ENCODE measurements at regions of chr2 and their contacts with region 1.

Region 1: GRCh38 chr2:168246483-168247340 is 683 bp downstream of the STK39 start:
- DNase-seq: peak; percentile 64 to 84 (median 79)
- ATAC-seq: peak; percentile 73
- H3K4me3 ChIP-seq: peak overlapping the region; percentile 74
- H3K4me3 Mint-ChIP-seq: peak overlapping the region; percentile 71 to 95 (median 93)
- H3K27ac ChIP-seq: peak overlapping the region; percentile 77
- H3K27ac Mint-ChIP-seq: peak overlapping the region; percentile 75 to 94 (median 93)
- H3K4me1 ChIP-seq: peaks cover 27 to 30% of the 10 kb centered on the region in 2 donors
- H3K4me1 Mint-ChIP-seq: peaks cover 16 to 49% (median 42%) of the 10 kb centered on the region in 7 donors
- H3K27me3 ChIP-seq: no peaks in the 10 kb centered on the region
- H3K27me3 Mint-ChIP-seq: peaks cover 0 to 11% (median 0%) of the 10 kb centered on the region in 5 donors

Region 2: GRCh38 chr2:168136392-168136977 is 110.2 kb before region 1 on chr2:
- CTCF ChIA-PET with region 1: no interaction called
- POLR2A ChIA-PET with region 1: no interaction called
- intact Hi-C with region 1: loop called (anchors 1 to 2 kb)
- DNase-seq: peak in 5 of 9 donors; percentile 14 to 36 (median 27)
- ATAC-seq: peak; percentile 67
- H3K4me3 ChIP-seq: no peak overlapping the region
- H3K4me3 Mint-ChIP-seq: no peak overlapping the region
- H3K27ac ChIP-seq: no peak overlapping the region
- H3K27ac Mint-ChIP-seq: peak overlapping the region in 2 of 9 donors; percentile 4 to 44
- H3K4me1 ChIP-seq: no peaks in the 10 kb centered on the region
- H3K4me1 Mint-ChIP-seq: peaks cover 4 to 11% (median 8%) of the 10 kb centered on the region in 7 donors
- H3K27me3 ChIP-seq: no peaks in the 10 kb centered on the region
- H3K27me3 Mint-ChIP-seq: no peaks in the 10 kb centered on the region

Region 3: DNA sequence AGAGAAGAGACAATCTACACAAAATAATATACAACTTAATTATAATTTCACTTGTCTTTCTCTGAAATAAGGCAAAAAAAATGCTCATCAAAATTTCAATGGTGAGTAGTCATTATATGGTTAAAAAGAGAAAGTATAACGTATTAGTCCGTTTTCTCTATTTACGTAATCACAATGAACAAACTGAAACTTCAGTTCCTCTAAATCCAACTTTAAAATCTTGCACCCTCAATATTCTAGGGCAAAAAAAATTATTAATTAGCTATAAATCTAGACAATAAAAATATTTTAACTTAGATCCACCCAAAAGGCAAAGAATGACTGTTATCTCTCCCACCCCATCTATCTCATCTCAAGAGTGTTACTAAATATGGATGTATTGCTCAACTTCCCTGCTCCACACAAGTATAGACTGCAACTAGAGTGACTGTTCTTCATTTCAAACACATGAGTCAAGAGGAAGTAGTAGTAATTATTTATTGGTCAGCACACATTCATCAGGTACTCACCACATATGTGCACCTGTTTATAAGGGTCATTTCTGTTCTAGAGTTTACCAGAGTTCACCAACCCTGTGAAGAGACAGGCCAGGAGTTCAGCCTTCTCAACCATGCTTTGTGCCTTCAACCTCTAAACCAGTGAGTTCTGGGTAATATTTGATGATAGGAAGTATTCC is 35.7 kb before region 1 on chr2:
- CTCF ChIA-PET with region 1: no interaction called
- POLR2A ChIA-PET with region 1: no interaction called
- intact Hi-C with region 1: loop called (anchors 2 kb)
- DNase-seq: no peak
- ATAC-seq: peak; percentile 83
- H3K4me3 ChIP-seq: no peak overlapping the region
- H3K4me3 Mint-ChIP-seq: peak overlapping the region in 3 of 10 donors; percentile 6 to 35 (median 7)
- H3K27ac ChIP-seq: no peak overlapping the region
- H3K27ac Mint-ChIP-seq: peak overlapping the region in 1 of 9 donors; percentile 7
- H3K4me1 ChIP-seq: peaks cover 7 to 24% of the 10 kb centered on the region in 2 donors
- H3K4me1 Mint-ChIP-seq: peaks cover 37 to 64% (median 51%) of the 10 kb centered on the region in 7 donors
- H3K27me3 ChIP-seq: no peaks in the 10 kb centered on the region
- H3K27me3 Mint-ChIP-seq: no peaks in the 10 kb centered on the region

Region 4: DNA sequence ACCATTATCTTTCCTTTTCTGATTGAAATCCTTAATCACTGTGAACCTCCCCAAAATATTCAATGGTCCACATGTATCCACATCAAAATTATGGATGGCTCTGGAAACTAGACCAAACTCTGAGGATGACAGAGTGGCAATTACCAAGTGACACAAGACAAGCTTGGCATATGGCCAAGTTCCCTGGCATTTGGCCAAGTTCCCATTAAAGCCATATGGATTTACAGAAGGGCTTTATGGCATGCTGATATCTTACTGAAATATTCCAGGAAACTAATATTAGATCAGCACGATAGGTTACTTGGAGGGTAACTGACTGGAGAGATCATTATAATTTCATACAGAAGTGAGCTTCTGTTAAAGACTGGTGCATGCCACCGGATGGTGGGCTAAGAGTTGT is 187.4 kb after region 1 on chr2:
- CTCF ChIA-PET with region 1: no interaction called
- POLR2A ChIA-PET with region 1: no interaction called
- intact Hi-C with region 1: loop called in 1 of 2 experiments (anchors 5 kb)
- DNase-seq: no peak
- ATAC-seq: no peak
- H3K4me3 ChIP-seq: no peak overlapping the region
- H3K4me3 Mint-ChIP-seq: peak overlapping the region in 4 of 10 donors; percentile 34 to 78 (median 70)
- H3K27ac ChIP-seq: no peak overlapping the region
- H3K27ac Mint-ChIP-seq: peak overlapping the region in 5 of 9 donors; percentile 6 to 94 (median 48)
- H3K4me1 ChIP-seq: peaks cover 6 to 59% of the 10 kb centered on the region in 2 donors
- H3K4me1 Mint-ChIP-seq: peaks cover 31 to 94% (median 70%) of the 10 kb centered on the region in 7 donors
- H3K27me3 ChIP-seq: no peaks in the 10 kb centered on the region
- H3K27me3 Mint-ChIP-seq: no peaks in the 10 kb centered on the region

Region 5: DNA sequence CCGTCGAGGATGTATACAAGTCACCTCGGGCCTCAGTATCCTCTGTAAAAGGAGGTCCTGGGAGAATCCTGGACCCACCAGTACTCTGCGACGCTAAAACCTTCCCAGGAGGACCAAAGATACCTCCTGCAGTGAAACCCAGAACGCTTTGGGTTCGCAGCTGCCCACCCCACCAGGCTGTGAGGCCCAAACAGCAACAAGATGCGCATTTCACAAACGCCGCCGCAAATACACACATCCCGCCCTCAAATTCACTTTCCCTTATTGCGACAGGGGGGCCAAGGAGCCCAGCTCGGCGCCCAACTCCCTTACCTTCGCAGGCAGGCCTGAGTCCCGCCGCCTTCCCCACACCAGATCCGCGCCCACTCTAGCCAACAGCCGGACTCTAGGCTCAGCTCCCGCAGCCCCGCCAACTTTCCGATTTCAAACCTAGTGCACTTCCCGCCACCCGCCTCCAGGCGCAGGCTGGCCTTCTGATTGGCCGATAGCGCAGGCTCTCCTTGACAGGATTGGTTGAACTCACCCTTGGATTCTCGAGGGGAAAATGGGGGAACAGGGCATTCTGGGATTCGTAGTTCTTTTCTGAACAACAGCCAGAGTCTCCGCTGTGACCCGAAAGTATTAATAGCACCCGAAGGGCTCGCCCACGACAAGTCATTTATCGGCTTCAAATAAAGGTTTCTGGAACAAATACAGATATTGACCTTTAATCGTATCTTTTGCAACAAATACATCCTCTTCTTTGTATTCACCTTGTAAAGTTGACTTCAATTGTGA is 643.5 kb after region 1 on chr2 and contains the start of gene SPC25:
- CTCF ChIA-PET with region 1: no interaction called
- POLR2A ChIA-PET with region 1: no interaction called
- intact Hi-C with region 1: loop called (anchors 2 kb)
- DNase-seq: peak; percentile 71 to 88 (median 84)
- ATAC-seq: peak; percentile 99
- H3K4me3 ChIP-seq: peak within 1 kb of the TSS; percentile 67
- H3K4me3 Mint-ChIP-seq: peak within 1 kb of the TSS; percentile 80 to 99 (median 94)
- H3K27ac ChIP-seq: no peak within 1 kb of the TSS
- H3K27ac Mint-ChIP-seq: peak within 1 kb of the TSS in 7 of 9 donors; percentile 2 to 96 (median 29)
- H3K4me1 ChIP-seq: peaks cover 0 to 4% of the 10 kb centered on the region in 2 donors
- H3K4me1 Mint-ChIP-seq: peaks cover 0 to 27% (median 9%) of the 10 kb centered on the region in 7 donors
- H3K27me3 ChIP-seq: no peaks in the 10 kb centered on the region
- H3K27me3 Mint-ChIP-seq: peaks cover 0 to 36% (median 7%) of the 10 kb centered on the region in 5 donors
- total RNA-seq, gene SPC25: 0.24 to 24.7 (median 0.28) TPM in 4 of 5 experiments, not detected in the other

Region 6: DNA sequence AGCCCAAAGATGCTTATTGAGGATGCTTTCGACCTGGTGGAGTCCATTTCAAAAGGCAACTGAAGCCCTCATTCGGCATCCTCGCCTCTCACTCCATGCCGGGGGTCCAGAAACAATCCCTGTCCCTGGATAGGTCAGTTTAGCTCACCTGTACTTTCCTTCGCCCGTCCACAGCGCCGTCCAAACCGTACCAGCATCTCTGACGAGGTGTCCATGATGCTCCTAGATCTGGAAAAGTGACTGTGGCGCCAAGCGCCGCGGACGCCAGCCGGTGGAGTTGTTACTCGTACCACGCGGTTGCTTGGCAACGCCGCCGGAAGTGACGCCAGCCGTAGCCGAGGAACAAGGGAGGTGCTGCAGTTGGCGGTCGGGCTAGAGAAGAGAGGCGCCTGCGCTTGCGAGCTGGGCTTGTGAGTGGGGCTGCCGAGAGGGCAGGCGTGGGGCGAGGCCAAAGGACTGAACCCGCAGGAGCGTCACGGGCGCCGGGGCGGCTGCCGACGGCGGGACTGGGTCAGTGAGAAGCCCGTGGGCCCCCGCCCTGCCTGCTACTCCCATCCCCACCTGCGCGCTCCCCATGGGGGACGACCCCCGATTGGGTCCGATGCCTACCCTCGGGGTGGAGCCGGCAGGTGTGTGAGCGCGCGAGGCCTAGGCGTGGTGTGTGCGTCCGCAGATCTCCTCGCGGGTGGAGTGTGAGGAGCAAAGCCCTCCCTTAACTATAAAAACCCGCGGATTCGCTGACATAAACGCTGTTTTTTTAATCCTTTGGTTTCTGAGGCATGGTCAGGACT is 1447.6 kb after region 1 on chr2 and contains the starts of genes CFAP210 and PHOSPHO2:
- CTCF ChIA-PET with region 1: no interaction called
- POLR2A ChIA-PET with region 1: no interaction called
- intact Hi-C with region 1: loop called in 1 of 2 experiments (anchors 5 kb)
- DNase-seq: peak; percentile 96 to 99 (median 98)
- ATAC-seq: peak; percentile 96
- H3K4me3 ChIP-seq: peak within 1 kb of the TSS; percentile 61
- H3K4me3 Mint-ChIP-seq: peak within 1 kb of the TSS; percentile 86 to 98 (median 90)
- H3K27ac ChIP-seq: peak within 1 kb of the TSS; percentile 87
- H3K27ac Mint-ChIP-seq: peak within 1 kb of the TSS; percentile 88 to 100 (median 99)
- H3K4me1 ChIP-seq: peaks cover 5 to 6% of the 10 kb centered on the region in 2 donors
- H3K4me1 Mint-ChIP-seq: peaks cover 5 to 22% (median 18%) of the 10 kb centered on the region in 7 donors
- H3K27me3 ChIP-seq: no peaks in the 10 kb centered on the region
- H3K27me3 Mint-ChIP-seq: peaks cover 0 to 30% (median 10%) of the 10 kb centered on the region in 5 donors
- total RNA-seq, gene CFAP210: 1.0 to 3.6 TPM in 2 of 5 experiments, not detected in the others
- total RNA-seq, gene PHOSPHO2: 4.5 to 9.5 (median 7.5) TPM